Common myeloid progenitor, CD34-positive (primary cell): ENCODE measurements at regions of chr18 and their contacts with region 1.

Region 1: DNA sequence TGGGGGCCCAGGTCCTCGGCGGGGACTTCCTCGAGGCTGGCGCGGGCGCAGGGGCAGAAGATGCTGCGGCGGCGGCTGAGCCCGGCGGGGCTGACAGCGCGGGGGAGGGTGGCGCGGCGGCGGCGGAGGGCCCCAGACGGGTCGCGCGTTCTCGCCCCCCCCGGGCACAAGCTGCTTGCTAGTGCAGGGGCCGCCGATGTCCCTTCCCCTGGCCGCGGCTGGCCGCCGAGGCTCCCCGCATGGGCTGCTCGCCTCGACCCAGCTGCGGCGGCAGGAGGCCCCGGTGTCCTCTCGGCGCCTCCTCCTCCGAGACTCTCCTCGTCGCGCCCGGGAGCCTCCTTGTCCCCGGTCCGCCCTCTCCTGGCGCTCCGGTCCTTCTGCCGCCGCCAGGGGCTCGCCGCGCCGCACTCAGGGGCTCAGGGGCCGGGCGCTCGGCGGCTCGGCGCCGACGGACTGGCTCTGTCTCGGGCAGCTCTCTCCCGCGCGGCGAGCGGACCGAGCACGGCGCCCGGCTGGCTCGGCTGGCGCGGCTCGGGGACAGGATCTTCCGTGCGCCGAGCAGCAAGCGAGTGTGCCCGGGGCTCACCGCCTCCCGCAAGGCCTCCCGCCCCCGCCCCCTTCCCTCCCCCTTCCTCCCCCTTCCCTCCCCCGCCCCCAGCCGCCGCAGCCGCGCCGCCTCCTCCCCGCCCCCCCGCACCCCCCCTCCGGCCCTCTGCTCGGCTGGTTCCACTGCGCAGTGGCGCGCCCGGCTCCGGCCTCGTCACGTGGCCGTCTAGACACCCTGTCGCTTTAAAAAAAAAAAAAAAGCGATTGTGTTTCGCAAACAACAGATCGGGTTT is 902 bp upstream of the SMAD7 start:
- DNase-seq: peak; percentile 76 to 87 (median 81)
- H3K4me3 ChIP-seq: peak overlapping the region; percentile 27 to 83 (median 72)
- H3K27ac ChIP-seq: peak overlapping the region in 1 of 2 experiments; percentile 68
- H3K4me1 ChIP-seq: peaks cover 9 to 67% (median 49%) of the 10 kb centered on the region in 4 experiments
- H3K27me3 ChIP-seq: peaks cover 0 to 46% (median 28%) of the 10 kb centered on the region in 5 experiments

Region 2: GRCh38 chr18:48834413-48835031 is 117.1 kb before region 1 on chr18:
- CTCF ChIA-PET with region 1: no interaction called
- POLR2A ChIA-PET with region 1: no interaction called
- DNase-seq: peak; percentile 86 to 95 (median 92)
- H3K4me3 ChIP-seq: no peak overlapping the region
- H3K27ac ChIP-seq: no peak overlapping the region
- H3K4me1 ChIP-seq: peaks cover 4 to 47% (median 36%) of the 10 kb centered on the region in 4 experiments
- H3K27me3 ChIP-seq: peaks cover 0 to 2% (median 0%) of the 10 kb centered on the region in 5 experiments

Region 3: DNA sequence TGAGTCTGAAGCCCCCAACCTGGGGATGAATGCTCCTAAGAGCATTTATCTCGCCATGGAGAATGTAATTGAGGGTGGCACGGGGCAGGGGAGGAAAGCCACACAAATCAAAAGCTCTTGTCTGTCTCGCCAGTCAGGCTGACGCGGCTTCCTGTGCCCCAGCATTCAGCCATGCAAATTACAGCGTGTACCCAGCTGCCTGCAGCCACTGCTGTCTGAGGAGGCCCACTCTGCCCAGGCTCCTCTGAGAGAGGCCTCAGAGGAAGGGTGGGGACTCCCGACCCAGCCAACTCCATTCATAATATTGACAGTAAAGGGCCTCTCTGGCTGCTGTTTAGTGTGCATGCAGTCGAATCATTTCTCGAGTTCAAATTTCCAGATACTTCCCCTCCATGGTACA is 22.9 kb before region 1 on chr18:
- CTCF ChIA-PET with region 1: interaction called, 6 read pairs
- POLR2A ChIA-PET with region 1: interaction called, 10 read pairs
- DNase-seq: peak; percentile 68 to 89 (median 83)
- H3K4me3 ChIP-seq: peak overlapping the region in 2 of 7 experiments; percentile 12 to 31
- H3K27ac ChIP-seq: no peak overlapping the region
- H3K4me1 ChIP-seq: peaks cover 18 to 87% (median 69%) of the 10 kb centered on the region in 4 experiments
- H3K27me3 ChIP-seq: peaks cover 0 to 6% (median 0%) of the 10 kb centered on the region in 5 experiments

Region 4: GRCh38 chr18:48934723-48935432 is 16.8 kb before region 1 on chr18:
- CTCF ChIA-PET with region 1: interaction called, 4 read pairs
- POLR2A ChIA-PET with region 1: interaction called, 10 read pairs
- DNase-seq: no peak
- H3K4me3 ChIP-seq: peak overlapping the region in 4 of 7 experiments; percentile 14 to 46 (median 32)
- H3K27ac ChIP-seq: no peak overlapping the region
- H3K4me1 ChIP-seq: peaks cover 17 to 64% (median 50%) of the 10 kb centered on the region in 4 experiments
- H3K27me3 ChIP-seq: peaks cover 0 to 8% (median 0%) of the 10 kb centered on the region in 5 experiments

Region 5: DNA sequence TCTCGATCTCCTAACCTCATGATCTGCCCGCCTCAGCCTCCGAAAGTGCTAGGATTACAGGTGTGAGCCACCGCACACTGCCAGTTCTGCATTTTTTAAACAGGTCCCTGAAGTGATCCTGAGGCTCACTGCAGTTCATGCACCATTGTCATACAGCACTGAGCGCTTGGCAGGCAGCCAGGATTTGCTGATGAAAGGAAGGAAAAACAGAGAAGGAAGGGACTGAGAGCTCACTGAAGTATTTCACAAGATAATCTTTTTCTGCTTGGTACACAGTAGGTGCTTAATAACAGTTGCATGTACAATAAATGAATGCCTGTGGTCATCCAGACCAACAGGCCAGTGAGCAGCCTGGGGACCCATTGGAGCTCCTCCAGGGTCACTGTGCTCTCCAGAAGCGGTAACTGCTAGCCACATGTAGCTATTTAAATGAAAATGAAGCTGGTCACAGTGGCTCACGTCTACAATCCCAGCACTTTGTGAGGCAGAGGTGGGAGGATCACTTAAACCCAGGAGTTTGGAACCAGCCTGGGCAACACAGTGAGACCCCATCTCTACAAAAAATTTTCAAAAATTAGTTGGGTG is 32.2 kb after region 1 on chr18:
- CTCF ChIA-PET with region 1: interaction called, 3 read pairs
- POLR2A ChIA-PET with region 1: interaction called, 14 read pairs
- DNase-seq: peak; percentile 22 to 66 (median 60)
- H3K4me3 ChIP-seq: no peak overlapping the region
- H3K27ac ChIP-seq: no peak overlapping the region
- H3K4me1 ChIP-seq: peaks cover 0 to 59% (median 22%) of the 10 kb centered on the region in 4 experiments
- H3K27me3 ChIP-seq: no peaks in the 10 kb centered on the region

Region 6: DNA sequence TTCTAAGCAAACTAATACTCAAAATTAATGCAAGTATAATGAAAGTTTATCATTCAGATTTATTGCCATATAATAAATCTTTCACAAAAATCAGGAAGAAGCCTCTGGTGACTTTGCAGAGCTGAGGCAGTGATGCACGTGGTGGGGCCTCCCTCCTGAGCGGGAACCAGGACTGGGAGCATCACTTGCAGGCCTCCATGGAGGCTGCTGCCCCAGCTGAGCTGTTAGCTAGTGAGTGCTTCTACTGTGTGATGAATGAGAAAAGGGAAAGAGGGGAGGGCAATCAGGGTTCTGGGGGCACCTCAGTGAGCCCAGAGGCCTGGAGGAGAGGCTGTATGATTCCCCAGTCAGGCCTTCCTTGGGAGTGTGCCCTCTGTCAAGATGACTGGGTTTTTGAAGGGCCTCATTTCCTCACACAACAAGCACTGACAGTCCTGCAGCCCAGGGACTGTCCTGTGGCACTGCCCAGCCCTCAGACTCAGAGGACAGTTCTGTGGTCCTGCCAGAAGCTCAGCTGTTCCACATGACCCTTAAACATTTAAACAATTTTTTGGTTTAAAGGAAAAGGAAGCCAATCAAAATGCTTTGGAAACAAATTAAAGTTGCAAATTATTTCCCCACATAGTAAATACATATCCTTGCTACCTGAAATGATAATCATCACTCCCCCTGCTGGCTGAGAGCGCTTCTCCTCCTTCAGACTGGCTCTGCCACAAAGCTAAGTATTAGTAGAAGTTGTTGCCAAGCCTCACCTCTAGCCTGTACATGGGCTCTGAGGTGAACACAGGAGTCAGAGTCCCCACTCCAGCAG is 90.0 kb after region 1 on chr18:
- CTCF ChIA-PET with region 1: interaction called, 10 read pairs
- POLR2A ChIA-PET with region 1: no interaction called
- DNase-seq: peak; percentile 61 to 81 (median 79)
- H3K4me3 ChIP-seq: no peak overlapping the region
- H3K27ac ChIP-seq: no peak overlapping the region
- H3K4me1 ChIP-seq: peaks cover 3 to 42% (median 32%) of the 10 kb centered on the region in 4 experiments
- H3K27me3 ChIP-seq: no peaks in the 10 kb centered on the region

Region 7: DNA sequence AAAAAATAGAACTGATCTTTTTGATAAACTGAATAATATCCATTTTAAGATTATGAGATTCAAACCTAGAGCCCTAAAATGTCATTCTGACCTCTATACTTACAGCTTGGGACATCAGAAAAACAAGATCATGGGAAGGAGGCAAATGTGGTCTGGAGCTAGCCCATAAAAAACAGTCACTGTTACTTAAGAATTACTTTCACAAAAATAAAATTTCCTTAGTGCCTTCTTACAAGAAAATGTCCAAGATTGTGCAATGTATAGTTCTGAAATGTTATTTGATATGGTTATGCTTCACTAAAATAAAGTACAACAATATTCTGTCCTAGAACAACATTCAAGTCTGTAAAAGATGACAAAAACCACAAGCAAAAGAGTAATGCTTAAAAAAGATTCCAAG is 261.2 kb after region 1 on chr18:
- CTCF ChIA-PET with region 1: no interaction called
- POLR2A ChIA-PET with region 1: interaction called, 15 read pairs
- DNase-seq: peak in 1 of 3 donors; percentile 6
- H3K4me3 ChIP-seq: no peak overlapping the region
- H3K27ac ChIP-seq: no peak overlapping the region
- H3K4me1 ChIP-seq: peaks cover 0 to 4% (median 0%) of the 10 kb centered on the region in 4 experiments
- H3K27me3 ChIP-seq: no peaks in the 10 kb centered on the region

Region 8: DNA sequence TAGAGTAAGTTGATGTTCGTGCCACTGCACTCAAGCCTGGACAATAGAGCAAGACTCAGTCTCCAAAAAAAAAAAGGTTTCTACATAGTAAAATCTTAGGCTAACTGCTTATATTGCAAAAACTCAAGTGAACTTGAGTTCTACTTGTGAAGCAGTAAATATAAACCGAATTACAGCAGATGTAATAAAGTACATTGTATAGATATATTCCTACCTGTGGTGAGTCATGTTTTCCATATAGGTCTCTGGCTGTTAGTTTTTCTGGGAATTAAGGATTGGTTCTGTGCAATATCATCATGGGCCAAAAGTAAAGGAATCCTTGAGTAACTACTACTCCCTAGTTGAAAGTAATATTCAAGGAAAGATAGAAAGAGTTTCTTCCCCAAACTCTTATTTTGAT is 348.9 kb after region 1 on chr18:
- CTCF ChIA-PET with region 1: no interaction called
- POLR2A ChIA-PET with region 1: no interaction called
- DNase-seq: no peak
- H3K4me3 ChIP-seq: no peak overlapping the region
- H3K27ac ChIP-seq: no peak overlapping the region
- H3K4me1 ChIP-seq: peaks cover 0 to 3% (median 0%) of the 10 kb centered on the region in 4 experiments
- H3K27me3 ChIP-seq: no peaks in the 10 kb centered on the region